ENCODE measurements at regions of chr17 and their contacts with region 1.

Region 1: GRCh38 chr17:49031965-49032928 is 35.1 kb downstream of the IGF2BP1 start:
- DNase-seq: peak; percentile 85
- H3K27ac ChIP-seq: no peak overlapping the region
- CTCF ChIP-seq: peak; percentile 89

Region 2: DNA sequence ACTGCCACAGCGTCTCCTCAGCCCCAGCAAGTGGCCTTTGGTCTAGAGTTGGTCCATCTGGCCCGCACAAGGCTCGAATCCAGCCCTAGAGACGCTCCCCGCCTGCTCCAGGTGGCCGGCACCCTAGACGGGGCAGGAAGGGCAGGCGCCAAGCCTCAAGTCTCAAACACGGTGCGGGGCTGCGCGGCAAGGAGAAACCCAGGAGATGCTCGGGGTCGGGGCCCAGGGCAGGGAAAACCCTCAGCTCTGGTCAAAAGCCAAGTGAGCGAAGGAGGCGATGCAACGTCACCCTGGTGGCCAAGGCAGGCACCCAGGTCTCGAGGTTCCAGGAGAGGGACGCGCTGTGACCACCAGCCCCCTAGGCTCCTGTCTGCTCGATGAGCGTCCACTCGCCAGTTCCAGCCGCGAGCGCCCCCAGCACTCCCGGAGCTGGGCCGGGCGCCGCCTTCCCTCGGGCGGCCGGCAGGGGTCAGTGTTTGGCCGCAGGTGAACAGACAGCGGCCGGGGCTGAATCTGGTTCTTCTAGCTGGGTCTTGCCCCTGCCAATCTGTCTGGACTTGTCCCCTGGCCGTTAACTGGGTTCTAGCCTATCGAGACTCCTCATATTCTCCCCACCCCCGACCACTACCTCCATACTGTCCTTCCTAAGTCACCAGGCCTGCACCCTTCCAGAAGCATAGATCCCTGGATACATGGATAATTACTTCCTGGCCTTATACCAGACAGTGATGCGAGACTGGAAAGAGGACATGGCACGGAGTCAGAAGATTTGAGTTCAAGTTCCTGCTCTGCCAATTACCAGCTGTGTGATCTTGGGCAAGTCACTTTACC is 353.9 kb before region 1 on chr17:
- CTCF ChIA-PET with region 1: interaction called, 12 read pairs
- POLR2A ChIA-PET with region 1: no interaction called
- DNase-seq: peak; percentile 66
- H3K27ac ChIP-seq: no peak overlapping the region
- CTCF ChIP-seq: peak; percentile 87

Region 3: DNA sequence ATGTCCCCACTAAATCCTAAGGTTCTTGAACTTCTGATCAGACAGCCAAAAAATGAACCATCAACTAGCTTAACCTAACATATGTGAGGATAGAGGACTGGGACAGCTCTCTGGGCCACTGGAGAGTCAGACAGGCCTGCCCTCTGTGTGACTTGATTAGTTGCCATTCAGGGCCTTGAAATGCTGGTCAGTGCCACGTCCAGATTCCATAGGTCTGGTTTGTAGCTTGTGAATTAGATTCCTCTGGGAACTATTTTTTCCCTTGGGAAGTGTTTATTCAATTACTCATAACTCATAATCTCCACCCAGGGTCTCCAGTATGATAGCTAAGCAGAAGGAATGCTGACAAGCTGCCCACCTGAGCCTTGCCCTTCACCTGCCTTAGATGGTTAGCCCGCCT is 13.1 kb after region 1 on chr17:
- CTCF ChIA-PET with region 1: interaction called, 12 read pairs
- POLR2A ChIA-PET with region 1: no interaction called
- DNase-seq: no peak
- H3K27ac ChIP-seq: no peak overlapping the region
- CTCF ChIP-seq: no peak